ENCODE measurements at regions of chr5 and their contacts with region 1.

Region 1: GRCh38 chr5:169548315-169548714 is 35.3 kb upstream of the SPDL1 start:
- DNase-seq: peak; percentile 22
- H3K4me3 ChIP-seq: no peak overlapping the region
- CTCF ChIP-seq: peak; percentile 38

Region 2: DNA sequence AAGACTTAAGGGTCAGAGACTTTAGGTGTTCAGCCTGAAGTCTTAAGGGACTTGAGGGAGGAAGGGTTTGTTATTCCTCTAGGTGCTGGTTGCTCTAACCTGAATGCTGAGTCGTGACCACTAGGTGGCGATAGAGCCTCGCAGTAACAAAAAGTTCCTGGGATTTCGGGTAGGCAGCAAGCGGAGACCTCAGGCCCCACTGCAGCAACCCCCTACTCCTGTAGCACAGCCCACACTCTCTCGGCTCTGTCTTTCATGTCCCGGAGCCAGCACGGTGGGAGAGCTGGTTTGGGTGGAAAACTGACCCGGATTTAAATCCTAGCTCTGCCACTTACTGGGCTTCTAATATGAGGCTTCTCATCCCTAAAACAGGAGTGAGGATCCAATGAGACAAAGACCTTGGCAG is 868.8 kb before region 1 on chr5:
- in situ Hi-C with region 1: loop called (anchors 25 kb)
- DNase-seq: peak; percentile 55
- H3K4me3 ChIP-seq: no peak overlapping the region
- CTCF ChIP-seq: peak; percentile 95

Region 3: DNA sequence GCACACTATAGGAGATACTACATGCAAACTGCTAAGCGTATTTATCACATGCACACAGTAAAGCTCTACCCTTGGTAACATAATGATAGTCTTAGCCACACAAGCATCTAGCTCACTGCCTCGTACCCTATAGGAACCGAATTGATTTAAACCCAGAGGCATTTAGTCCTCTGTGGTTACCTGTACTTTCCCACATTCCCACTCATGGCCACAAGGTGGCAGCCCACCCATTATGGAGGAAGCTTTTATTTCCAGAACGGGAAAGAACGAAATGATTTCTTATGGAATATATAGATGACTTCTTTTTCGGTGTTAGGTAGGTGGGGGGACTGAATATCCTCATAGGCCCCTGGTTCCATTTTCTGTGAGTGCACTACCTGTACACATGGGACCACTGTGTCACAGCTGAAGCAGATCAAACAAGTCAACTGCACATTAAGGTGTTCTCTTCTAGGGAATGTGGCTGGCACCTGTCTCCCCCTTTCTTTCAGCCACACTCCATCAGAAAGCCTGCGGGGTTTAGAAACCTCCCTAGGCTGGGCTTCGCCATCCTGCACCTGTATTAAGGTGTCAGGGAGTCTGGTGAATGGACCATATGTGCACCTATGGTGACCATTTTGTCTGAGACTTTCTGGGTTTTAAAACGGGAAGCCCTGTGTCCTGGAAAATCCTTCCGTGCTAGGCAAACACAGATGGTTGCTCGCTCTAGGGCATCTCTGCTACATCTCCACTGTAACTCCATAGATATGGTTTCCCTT is 560.6 kb before region 1 on chr5:
- in situ Hi-C with region 1: loop called (anchors 25 kb)
- DNase-seq: peak; percentile 60
- H3K4me3 ChIP-seq: no peak overlapping the region
- CTCF ChIP-seq: peak; percentile 89

Region 4: GRCh38 chr5:169494941-169495548 is 53.3 kb before region 1 on chr5:
- in situ Hi-C with region 1: loop called (anchors 5 kb)
- DNase-seq: no peak
- H3K4me3 ChIP-seq: no peak overlapping the region
- CTCF ChIP-seq: no peak

Region 5: DNA sequence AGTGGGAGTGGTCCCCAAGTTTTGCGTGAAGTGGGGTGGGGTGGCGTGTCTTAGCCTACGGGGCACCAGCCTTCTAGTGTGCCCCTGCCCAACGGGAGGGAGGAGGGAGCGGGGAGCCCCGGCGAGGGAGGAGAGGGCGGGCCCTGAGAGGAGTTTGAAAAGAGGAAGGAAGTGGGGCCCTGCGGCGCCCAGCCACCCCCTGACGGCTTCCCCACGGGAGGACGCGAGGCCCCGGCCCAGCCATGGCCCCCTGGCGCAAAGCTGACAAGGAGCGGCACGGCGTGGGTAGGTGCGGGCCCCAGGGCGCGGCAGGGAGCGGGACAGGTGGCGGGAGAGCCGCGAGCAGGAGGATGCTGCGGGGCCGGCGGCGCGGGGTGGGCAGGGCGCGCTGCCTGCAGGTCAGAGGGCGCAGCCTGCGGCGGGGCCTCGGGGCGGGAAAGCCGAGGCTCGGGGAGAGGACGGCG is 88.8 kb after region 1 on chr5 and contains the start of gene DOCK2:
- in situ Hi-C with region 1: no loop called
- DNase-seq: no peak
- H3K4me3 ChIP-seq: peak within 1 kb of the TSS; percentile 22
- CTCF ChIP-seq: no peak